Psoas muscle (tissue), 8 donors: ENCODE measurements at regions of chr9 and their contacts with region 1.

Region 1: DNA sequence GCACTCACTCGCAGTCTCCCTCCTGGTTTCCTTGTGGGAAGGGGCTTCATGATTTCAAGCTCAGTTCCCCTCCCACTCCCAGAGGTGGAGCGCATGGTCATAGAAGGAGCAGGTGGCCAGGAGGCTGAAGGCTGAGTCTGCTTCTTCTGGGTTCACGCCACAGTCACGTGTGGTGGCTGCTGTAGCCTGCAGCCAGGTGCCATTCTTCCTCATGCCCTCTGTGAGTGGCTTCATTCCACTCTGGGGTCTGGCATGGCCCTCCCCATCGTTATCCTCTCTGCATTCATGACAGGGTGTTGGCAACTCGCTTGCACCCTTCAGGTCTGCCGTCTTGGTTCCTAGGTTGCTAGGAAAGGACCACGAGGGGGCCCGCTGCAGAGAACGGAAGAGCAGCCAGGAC is 3.5 kb downstream of the MRPL41 start:
- DNase-seq: no peak
- ATAC-seq: no peak
- H3K4me3 ChIP-seq: no peak overlapping the region
- H3K27ac ChIP-seq: no peak overlapping the region
- H3K4me1 ChIP-seq: peaks cover 9% of the 10 kb centered on the region
- H3K27me3 ChIP-seq: no peaks in the 10 kb centered on the region
- CTCF ChIP-seq: no peak

Region 2: DNA sequence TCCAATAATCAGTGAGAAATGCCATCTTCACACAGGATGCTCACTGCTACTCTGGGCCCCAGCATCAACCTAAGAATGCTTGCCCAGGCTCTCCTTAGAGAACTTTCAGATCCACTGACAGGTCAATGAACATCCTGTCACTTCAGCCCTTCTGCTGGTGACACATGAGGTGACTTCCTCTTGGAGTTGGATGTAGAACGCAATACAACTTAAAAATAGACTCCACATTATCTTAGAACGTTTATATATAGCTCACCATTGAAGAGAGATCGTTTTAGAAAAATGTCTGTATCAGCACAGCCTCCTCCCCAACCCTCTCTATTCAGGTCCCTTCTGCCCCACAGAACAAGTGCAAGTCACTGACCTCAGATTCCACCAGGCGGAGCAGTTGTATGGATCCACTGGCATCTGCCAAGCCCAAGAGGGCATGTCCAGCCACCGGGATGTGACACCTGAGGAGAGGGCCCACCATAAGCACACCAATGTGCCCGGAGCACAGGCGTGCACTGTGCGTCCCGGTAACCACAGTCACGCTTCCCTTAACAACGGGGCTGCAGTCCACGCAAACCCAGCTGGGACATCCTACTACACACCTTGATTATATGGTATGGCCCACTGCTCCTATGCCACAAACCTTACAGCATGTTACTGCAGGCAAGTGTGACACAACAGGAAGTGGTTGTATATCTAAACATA is 20.7 kb after region 1 on chr9:
- intact Hi-C with region 1: loop called in 1 of 2 experiments (anchors 2 kb)
- DNase-seq: no peak
- ATAC-seq: no peak
- H3K4me3 ChIP-seq: no peak overlapping the region
- H3K27ac ChIP-seq: peak overlapping the region; percentile 23
- H3K4me1 ChIP-seq: peaks cover 35% of the 10 kb centered on the region
- H3K27me3 ChIP-seq: no peaks in the 10 kb centered on the region
- CTCF ChIP-seq: no peak

Region 3: GRCh38 chr9:137960496-137960895 is 405.3 kb after region 1 on chr9:
- intact Hi-C with region 1: no loop called
- DNase-seq: peak in 1 of 2 donors; percentile 18
- ATAC-seq: no peak
- H3K4me3 ChIP-seq: no peak overlapping the region
- H3K27ac ChIP-seq: no peak overlapping the region
- H3K4me1 ChIP-seq: no peaks in the 10 kb centered on the region
- H3K27me3 ChIP-seq: peaks cover 0 to 7% (median 0%) of the 10 kb centered on the region in 3 donors
- CTCF ChIP-seq: no peak